HepG2 (cell line): ENCODE measurements at regions of chr20 and their contacts with region 1.

Region 1: DNA sequence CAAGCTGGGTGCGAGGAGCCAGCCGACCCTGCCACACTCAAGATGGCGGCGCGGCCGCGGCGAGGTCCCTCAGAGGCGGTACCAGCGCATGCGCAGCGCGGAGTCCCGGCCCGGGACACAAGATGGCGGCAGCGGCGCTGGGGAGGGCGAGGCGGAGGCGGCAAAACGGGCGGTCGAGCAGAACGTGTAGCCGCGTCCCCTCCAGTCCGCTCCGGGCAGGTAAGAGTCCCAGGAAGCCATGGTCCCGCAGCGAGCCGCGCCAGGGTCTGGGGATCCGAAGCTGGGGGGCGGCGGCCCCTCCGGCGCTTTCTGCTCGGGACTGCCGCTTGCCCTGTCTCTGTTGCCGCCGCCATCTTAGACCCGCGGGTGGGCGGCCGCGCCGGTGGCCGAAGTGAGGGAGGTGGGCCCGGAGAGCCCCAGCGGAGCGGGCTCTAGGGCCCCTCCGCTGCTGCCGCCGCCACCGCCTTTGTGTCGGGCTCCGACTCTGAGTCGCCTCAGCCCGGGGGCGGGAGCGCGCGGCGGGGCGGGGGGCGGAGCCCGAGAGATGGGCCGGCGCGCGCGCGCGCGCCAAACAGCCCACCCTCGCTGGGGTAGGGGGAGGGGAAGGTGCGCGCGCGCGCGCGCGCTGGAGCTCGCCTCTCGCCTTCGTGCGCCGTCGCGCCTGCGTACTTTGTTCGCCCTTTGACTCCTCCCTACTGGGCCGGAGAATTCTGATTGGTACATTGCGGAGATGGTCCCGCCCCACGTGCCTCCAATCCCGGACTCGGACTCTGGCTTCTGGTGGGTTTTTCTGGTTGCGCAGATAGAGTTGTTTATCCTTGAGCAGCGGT is at the start of gene PCIF1:
- DNase-seq: peak; percentile 98
- ATAC-seq: peak; percentile 72
- H3K4me3 ChIP-seq: peak within 1 kb of the TSS; percentile 92 to 97 (median 95)
- H3K27ac ChIP-seq: peak within 1 kb of the TSS; percentile 97
- H3K4me1 ChIP-seq: peaks cover 54% of the 10 kb centered on the region
- H3K27me3 ChIP-seq: no peaks in the 10 kb centered on the region; a peak in 1 of 5 replicates
- CTCF ChIP-seq: no peak
- EP300 ChIP-seq: peak in 1 of 2 experiments; percentile 23; a peak in 3 of 4 replicates
- POLR2A ChIP-seq: peak; percentile 64 to 98
- RAD21 ChIP-seq: peak; percentile 90
- total RNA-seq, gene PCIF1: 18.5 and 20.9 TPM in 2 replicates

Region 2: DNA sequence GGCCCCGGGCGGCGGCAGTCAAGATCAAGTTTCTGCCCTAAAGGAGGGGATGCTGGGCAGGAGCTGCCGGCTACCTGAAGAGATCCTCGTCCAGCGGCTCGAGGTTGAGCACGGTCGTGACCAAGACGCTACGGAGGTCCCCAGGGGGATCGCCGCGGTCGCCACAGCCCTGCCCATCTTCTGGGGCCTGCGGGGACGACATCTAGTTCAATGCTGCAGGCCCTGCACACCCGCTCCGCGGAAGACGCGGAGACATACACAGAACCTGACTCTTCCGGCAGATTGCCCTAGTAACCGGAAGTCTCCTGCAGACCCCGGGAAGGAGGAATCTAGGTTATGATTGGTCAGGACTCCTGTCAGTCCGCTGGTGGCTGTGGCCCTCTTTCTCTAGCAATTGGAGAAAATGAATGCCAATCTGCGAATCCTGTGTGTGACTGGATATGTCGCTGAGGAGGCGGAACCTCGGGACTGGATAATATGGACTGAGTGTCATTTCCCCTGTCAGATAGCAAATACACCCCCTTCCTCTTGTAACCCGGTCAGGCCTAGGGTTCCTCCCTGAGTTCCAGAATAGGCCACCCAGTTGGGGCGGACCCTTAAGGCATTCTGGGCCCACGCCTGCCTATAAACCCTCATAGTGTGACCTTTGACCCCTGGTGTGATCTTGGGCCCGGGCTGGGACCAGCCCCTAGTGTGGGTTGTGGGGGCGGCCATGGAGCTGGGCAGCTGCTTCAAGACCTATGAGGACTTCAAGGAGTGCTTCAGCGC is 77.5 kb before region 1 on chr20 and contains the starts of genes ACOT8 and ZSWIM3:
- CTCF ChIA-PET with region 1: no interaction called
- POLR2A ChIA-PET with region 1: interaction called, 27 read pairs
- in situ Hi-C with region 1: no loop called
- intact Hi-C with region 1: loop called (anchors 2 kb)
- DNase-seq: peak; percentile 100
- ATAC-seq: peak; percentile 98
- H3K4me3 ChIP-seq: peak within 1 kb of the TSS; percentile 78 to 91 (median 83)
- H3K27ac ChIP-seq: peak within 1 kb of the TSS; percentile 49
- H3K4me1 ChIP-seq: peaks cover 55% of the 10 kb centered on the region
- H3K27me3 ChIP-seq: no peaks in the 10 kb centered on the region; a peak in 1 of 5 replicates
- CTCF ChIP-seq: 0 out of 2 replicates have a peak, but pooled peaks have one; percentile 19
- EP300 ChIP-seq: peak in 1 of 2 experiments; percentile 41; a peak in 1 of 4 replicates
- POLR2A ChIP-seq: peak; percentile 84 to 97
- RAD21 ChIP-seq: peak; percentile 62
- total RNA-seq, gene ACOT8: 31.4 and 39.1 TPM in 2 replicates
- total RNA-seq, gene ZSWIM3: 5.8 and 7.3 TPM in 2 replicates

Region 3: GRCh38 chr20:45905505-45906079 is 29.2 kb before region 1 on chr20:
- CTCF ChIA-PET with region 1: no interaction called
- POLR2A ChIA-PET with region 1: interaction called, 58 read pairs
- in situ Hi-C with region 1: no loop called
- intact Hi-C with region 1: no loop called
- DNase-seq: peak; percentile 87
- ATAC-seq: peak; percentile 67
- H3K4me3 ChIP-seq: no peak overlapping the region
- H3K27ac ChIP-seq: peak overlapping the region; percentile 21
- H3K4me1 ChIP-seq: peaks cover 50% of the 10 kb centered on the region
- H3K27me3 ChIP-seq: no peaks in the 10 kb centered on the region
- CTCF ChIP-seq: no peak
- EP300 ChIP-seq: no peak
- POLR2A ChIP-seq: peak in 1 of 2 experiments; percentile 59; a peak in 2 of 4 replicates
- RAD21 ChIP-seq: no peak

Region 4: GRCh38 chr20:45924391-45925261 is 10.2 kb before region 1 on chr20:
- CTCF ChIA-PET with region 1: no interaction called
- POLR2A ChIA-PET with region 1: interaction called, 78 read pairs
- in situ Hi-C with region 1: no loop called
- intact Hi-C with region 1: no loop called
- DNase-seq: peak; percentile 66
- ATAC-seq: peak; percentile 15
- H3K4me3 ChIP-seq: peak overlapping the region in 2 of 3 experiments; percentile 20 to 52; a peak in 2 of 6 replicates
- H3K27ac ChIP-seq: no peak overlapping the region
- H3K4me1 ChIP-seq: peaks cover 84% of the 10 kb centered on the region
- H3K27me3 ChIP-seq: no peaks in the 10 kb centered on the region; a peak in 1 of 5 replicates
- CTCF ChIP-seq: no peak
- EP300 ChIP-seq: no peak
- POLR2A ChIP-seq: no peak
- RAD21 ChIP-seq: peak; percentile 25; the same call in 1 of the 2 replicates

Region 5: DNA sequence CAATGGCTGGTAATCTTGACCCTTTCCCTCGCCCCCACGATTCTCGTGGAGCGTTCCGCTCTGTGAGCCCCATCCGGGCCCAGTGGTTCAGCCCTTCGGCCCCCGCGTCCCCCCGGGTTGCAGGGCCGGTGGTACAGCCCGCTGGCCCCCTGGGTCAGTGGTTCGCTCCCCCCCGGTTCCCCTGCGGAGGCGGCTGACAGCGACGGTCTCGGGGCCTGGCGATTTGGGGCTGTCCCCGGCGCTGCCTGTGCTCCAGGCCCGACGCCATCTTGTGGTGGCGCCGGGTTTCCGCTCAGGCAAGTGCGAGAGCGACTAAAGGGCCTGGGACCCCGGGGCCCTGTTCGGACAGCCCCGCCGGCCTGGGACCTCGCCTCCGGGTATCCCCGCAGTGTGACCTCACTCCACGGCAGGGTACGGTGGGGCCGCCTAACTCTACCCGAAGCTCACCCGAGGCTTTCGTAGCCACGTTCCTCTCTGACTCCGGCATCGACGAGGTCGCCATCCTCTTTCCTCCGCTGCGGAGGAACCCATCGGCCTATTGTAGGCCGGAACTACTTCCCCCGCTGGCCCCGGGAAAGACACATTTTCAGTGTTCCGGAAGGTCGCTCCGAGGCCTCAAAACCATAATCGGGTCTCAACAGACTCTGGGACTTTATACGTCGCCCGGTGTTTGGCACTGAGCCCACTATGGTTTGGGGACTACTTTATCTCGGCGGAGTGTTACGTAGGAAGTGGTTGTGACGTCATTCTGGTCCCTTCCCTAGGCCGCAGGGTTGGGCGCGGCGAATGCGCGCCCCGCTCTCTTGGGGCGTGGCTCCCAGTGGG is 37.1 kb after region 1 on chr20 and contains the start of gene ZNF335:
- CTCF ChIA-PET with region 1: no interaction called
- POLR2A ChIA-PET with region 1: interaction called, 67 read pairs
- in situ Hi-C with region 1: no loop called
- intact Hi-C with region 1: loop called (anchors 5 kb)
- DNase-seq: peak; percentile 96
- ATAC-seq: peak; percentile 82
- H3K4me3 ChIP-seq: peak within 1 kb of the TSS; percentile 82 to 97 (median 96)
- H3K27ac ChIP-seq: peak within 1 kb of the TSS; percentile 98
- H3K4me1 ChIP-seq: peaks cover 26% of the 10 kb centered on the region
- H3K27me3 ChIP-seq: peaks cover 0 to 7% of the 10 kb centered on the region in 2 experiments; a peak in 1 of 5 replicates
- CTCF ChIP-seq: peak; percentile 60
- EP300 ChIP-seq: peak in 1 of 2 experiments; percentile 39; a peak in 3 of 4 replicates
- POLR2A ChIP-seq: peak; percentile 65 to 95; a peak in 3 of 4 replicates
- RAD21 ChIP-seq: peak; percentile 44
- total RNA-seq, gene ZNF335: 6.0 and 13.7 TPM in 2 replicates